A673 (cell line): ENCODE measurements at regions of chr12 and their contacts with region 1.

Region 1: DNA sequence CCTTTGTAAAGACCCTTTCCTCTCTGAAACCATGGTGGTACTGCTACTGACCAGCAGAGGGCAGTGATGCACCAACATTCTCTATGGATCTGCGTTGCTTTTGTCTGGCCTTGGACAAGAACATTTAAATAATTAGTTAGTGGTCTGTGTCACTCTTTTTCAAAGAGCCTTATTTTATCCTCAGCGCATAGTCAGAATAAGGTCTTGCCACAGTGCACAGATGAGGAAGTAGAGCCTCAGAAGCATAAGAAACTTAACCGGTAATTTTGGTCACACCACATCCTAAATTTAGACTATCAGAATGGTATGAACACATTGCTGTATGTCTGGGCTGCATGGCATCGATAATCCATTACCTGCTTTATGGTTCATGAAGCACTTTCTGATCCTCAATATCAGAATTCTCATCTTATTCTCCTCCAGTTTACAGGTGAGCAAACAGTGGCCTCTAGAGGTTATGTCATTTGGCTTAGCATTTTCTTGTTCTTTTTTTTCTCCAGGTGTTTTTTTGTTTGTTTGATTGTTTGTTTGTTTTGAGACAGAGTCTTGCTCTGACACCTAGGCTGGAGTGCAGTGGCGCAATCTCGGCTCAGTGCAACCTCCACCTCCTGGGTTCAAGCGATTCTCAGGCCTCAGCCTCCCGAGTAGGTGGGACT is 23.7 kb upstream of the IFT81 start:
- DNase-seq: peak; percentile 87
- H3K4me3 ChIP-seq: no peak overlapping the region
- H3K27ac ChIP-seq: no peak overlapping the region
- H3K4me1 ChIP-seq: peaks cover 10% of the 10 kb centered on the region
- H3K27me3 ChIP-seq: no peaks in the 10 kb centered on the region
- CTCF ChIP-seq: peak; percentile 94

Region 2: DNA sequence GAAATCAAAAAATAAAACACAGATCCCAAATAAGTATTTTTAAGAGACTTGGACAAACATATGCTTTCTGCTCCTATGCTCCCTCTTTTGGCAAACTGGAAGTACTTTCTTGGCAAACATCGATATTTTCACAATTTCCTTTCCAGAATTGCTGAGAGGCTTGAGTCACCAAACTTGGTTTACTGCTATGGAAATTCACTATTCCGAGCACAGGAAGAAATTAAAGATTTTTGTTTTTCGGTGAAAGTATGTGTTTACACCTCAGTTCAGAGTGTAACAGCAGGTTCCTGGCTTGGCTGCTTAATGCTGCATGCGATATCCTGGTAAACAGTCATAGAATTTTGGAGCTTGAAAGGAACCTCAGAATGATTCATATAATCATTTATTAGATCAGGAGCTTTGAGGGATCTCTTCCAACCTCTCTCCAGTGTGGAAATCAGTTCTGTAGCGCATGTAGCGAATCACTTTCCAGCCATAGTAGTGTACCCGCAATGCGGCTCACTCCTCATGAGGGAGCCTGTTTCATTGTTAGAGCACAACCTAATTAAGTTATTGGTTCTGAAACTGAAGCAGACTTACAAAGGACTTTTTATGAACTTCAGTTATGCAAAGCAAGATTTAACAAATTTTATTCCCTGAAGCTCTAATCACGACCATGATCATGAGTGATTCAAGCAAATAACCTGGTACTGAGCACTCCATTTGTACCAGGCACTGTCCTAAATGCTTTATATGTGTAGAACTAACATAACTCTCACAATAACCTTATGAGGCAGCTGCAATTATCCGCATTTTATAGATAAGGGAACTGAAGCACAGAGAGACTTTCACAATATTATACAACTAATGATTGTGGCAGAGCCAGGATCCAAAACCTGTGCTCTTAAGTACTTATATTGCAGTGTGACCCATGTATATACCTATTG is 124.2 kb after region 1 on chr12:
- CTCF ChIA-PET with region 1: interaction called, 10 read pairs
- POLR2A ChIA-PET with region 1: no interaction called
- intact Hi-C with region 1: loop called (anchors 5 kb)
- DNase-seq: peak; percentile 81
- H3K4me3 ChIP-seq: peak overlapping the region; percentile 13
- H3K27ac ChIP-seq: peak overlapping the region; percentile 62
- H3K4me1 ChIP-seq: peaks cover 31% of the 10 kb centered on the region
- H3K27me3 ChIP-seq: no peaks in the 10 kb centered on the region
- CTCF ChIP-seq: peak; percentile 66

Region 3: GRCh38 chr12:110280779-110281548 is 180.5 kb after region 1 on chr12 and contains the start of gene ATP2A2:
- CTCF ChIA-PET with region 1: no interaction called
- POLR2A ChIA-PET with region 1: no interaction called
- intact Hi-C with region 1: loop called (anchors 5 kb)
- DNase-seq: peak; percentile 96
- H3K4me3 ChIP-seq: peak within 1 kb of the TSS; percentile 88
- H3K27ac ChIP-seq: peak within 1 kb of the TSS; percentile 96
- H3K4me1 ChIP-seq: peaks cover 30% of the 10 kb centered on the region
- H3K27me3 ChIP-seq: no peaks in the 10 kb centered on the region
- CTCF ChIP-seq: no peak
- total RNA-seq, gene ATP2A2: 296 and 333 TPM in 2 replicates

Region 4: GRCh38 chr12:110349531-110350151 is 249.2 kb after region 1 on chr12:
- CTCF ChIA-PET with region 1: no interaction called
- POLR2A ChIA-PET with region 1: no interaction called
- intact Hi-C with region 1: loop called (anchors 5 kb)
- DNase-seq: peak; percentile 49
- H3K4me3 ChIP-seq: no peak overlapping the region
- H3K27ac ChIP-seq: no peak overlapping the region
- H3K4me1 ChIP-seq: peaks cover 18% of the 10 kb centered on the region
- H3K27me3 ChIP-seq: no peaks in the 10 kb centered on the region
- CTCF ChIP-seq: no peak